Activated B cell treated with CpG ODN at 0.5 μM for 24 hours (primary cell): ENCODE measurements at regions of chr6 and their contacts with region 1.

Region 1: GRCh38 chr6:133916650-133917151 is 27.8 kb downstream of the TCF21 start:
- DNase-seq: peak; percentile 40
- ATAC-seq: peak; percentile 34
- H3K4me3 Mint-ChIP-seq: no peak overlapping the region
- H3K27ac Mint-ChIP-seq: no peak overlapping the region
- H3K4me1 Mint-ChIP-seq: peaks cover 4% of the 10 kb centered on the region
- H3K27me3 Mint-ChIP-seq: peaks cover 17% of the 10 kb centered on the region
- CTCF ChIP-seq: peak; percentile 76

Region 2: GRCh38 chr6:132830334-132830751 is 1086.4 kb before region 1 on chr6:
- CTCF ChIA-PET with region 1: interaction called, 6 read pairs
- POLR2A ChIA-PET with region 1: interaction called, 5 read pairs
- intact Hi-C with region 1: loop called (anchors 1 kb)
- DNase-seq: no peak
- ATAC-seq: no peak
- H3K4me3 Mint-ChIP-seq: no peak overlapping the region
- H3K27ac Mint-ChIP-seq: no peak overlapping the region
- H3K4me1 Mint-ChIP-seq: no peaks in the 10 kb centered on the region
- H3K27me3 Mint-ChIP-seq: no peaks in the 10 kb centered on the region
- CTCF ChIP-seq: no peak

Region 3: DNA sequence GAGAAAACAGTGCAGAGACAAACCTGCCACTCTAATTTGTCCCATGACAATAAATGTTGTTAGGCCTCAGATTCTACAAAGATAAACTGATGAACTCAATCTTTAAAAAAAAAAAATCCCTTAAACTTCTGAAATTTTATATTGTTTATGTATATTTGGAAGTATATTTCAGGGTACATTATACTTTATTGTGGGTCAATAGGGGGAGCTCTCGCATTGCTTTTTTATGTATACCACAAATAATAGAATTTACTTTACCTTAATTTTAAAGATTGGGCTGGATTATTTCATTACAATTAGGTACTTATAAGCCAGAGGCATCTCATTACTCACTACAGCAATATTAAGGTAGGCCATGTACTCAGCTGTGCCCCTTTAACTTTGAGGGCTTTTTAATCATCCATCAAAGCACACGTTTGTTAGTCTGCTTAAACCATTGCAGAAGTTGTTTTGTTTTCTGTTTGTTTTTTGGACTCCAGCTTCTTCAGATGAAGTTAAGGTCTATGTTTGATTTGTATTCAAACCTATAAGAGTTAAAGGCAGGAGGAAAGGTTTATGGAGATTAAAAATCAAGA is 731.8 kb before region 1 on chr6:
- CTCF ChIA-PET with region 1: no interaction called
- POLR2A ChIA-PET with region 1: no interaction called
- intact Hi-C with region 1: loop called (anchors 5 kb)
- DNase-seq: no peak
- ATAC-seq: no peak
- H3K4me3 Mint-ChIP-seq: no peak overlapping the region
- H3K27ac Mint-ChIP-seq: no peak overlapping the region
- H3K4me1 Mint-ChIP-seq: no peaks in the 10 kb centered on the region
- H3K27me3 Mint-ChIP-seq: no peaks in the 10 kb centered on the region
- CTCF ChIP-seq: no peak

Region 4: GRCh38 chr6:133568970-133569889 is 347.5 kb before region 1 on chr6:
- CTCF ChIA-PET with region 1: interaction called, 11 read pairs
- POLR2A ChIA-PET with region 1: no interaction called
- intact Hi-C with region 1: loop called (anchors 2 kb)
- DNase-seq: no peak
- ATAC-seq: no peak
- H3K4me3 Mint-ChIP-seq: no peak overlapping the region
- H3K27ac Mint-ChIP-seq: no peak overlapping the region
- H3K4me1 Mint-ChIP-seq: peaks cover 4% of the 10 kb centered on the region
- H3K27me3 Mint-ChIP-seq: peaks cover 27% of the 10 kb centered on the region
- CTCF ChIP-seq: no peak

Region 5: DNA sequence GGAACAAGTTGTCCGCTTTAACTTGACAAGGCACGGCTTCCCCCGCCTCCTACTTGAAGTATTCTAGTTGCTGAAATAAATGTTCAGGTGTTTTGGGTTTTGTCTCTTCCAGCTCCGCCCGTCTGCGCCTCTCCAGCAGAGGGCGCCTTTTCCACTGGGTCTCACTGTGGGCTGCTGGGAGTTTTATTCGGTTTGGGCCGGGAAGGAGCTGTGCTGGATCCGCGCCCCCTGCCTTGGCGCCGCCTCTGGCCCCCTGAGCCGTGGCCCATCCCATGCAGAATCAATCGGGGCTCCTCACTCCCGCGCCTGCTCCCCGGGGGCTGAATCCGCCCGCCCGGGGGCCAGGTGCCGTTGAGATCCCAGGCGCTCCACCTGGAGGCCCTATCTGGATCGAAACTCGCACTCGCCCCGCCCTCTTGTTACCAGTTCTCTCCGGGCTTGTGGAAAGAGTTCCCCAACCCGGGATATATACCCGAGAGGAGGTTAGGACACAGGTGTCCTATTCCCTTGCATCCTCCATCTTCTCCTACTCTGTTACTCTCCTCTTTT is 78.8 kb before region 1 on chr6:
- CTCF ChIA-PET with region 1: interaction called, 6 read pairs
- POLR2A ChIA-PET with region 1: no interaction called
- intact Hi-C with region 1: loop called (anchors 1 kb)
- DNase-seq: peak; percentile 29
- ATAC-seq: peak; percentile 49
- H3K4me3 Mint-ChIP-seq: peak overlapping the region; percentile 51
- H3K27ac Mint-ChIP-seq: no peak overlapping the region
- H3K4me1 Mint-ChIP-seq: peaks cover 8% of the 10 kb centered on the region
- H3K27me3 Mint-ChIP-seq: peaks cover 28% of the 10 kb centered on the region
- CTCF ChIP-seq: no peak

Region 6: GRCh38 chr6:134063966-134064445 is 147.3 kb after region 1 on chr6:
- CTCF ChIA-PET with region 1: interaction called, 129 read pairs
- POLR2A ChIA-PET with region 1: interaction called, 7 read pairs
- intact Hi-C with region 1: no loop called
- DNase-seq: no peak
- ATAC-seq: peak; percentile 94
- H3K4me3 Mint-ChIP-seq: no peak overlapping the region
- H3K27ac Mint-ChIP-seq: no peak overlapping the region
- H3K4me1 Mint-ChIP-seq: peaks cover 2% of the 10 kb centered on the region
- H3K27me3 Mint-ChIP-seq: peaks cover 3% of the 10 kb centered on the region
- CTCF ChIP-seq: peak; percentile 16

Region 7: GRCh38 chr6:135212020-135212806 is 1295.5 kb after region 1 on chr6:
- CTCF ChIA-PET with region 1: no interaction called
- POLR2A ChIA-PET with region 1: no interaction called
- intact Hi-C with region 1: no loop called
- DNase-seq: no peak
- ATAC-seq: no peak
- H3K4me3 Mint-ChIP-seq: no peak overlapping the region
- H3K27ac Mint-ChIP-seq: no peak overlapping the region
- H3K4me1 Mint-ChIP-seq: peaks cover 9% of the 10 kb centered on the region
- H3K27me3 Mint-ChIP-seq: no peaks in the 10 kb centered on the region
- CTCF ChIP-seq: no peak